ENCODE measurements at regions of chr18 and their contacts with region 1.

Region 1: GRCh38 chr18:24176727-24177416 is 38.0 kb downstream of the CABYR start:
- DNase-seq: peak; percentile 66
- H3K4me3 Mint-ChIP-seq: no peak overlapping the region
- H3K27ac Mint-ChIP-seq: no peak overlapping the region
- H3K4me1 Mint-ChIP-seq: no peaks in the 10 kb centered on the region
- H3K27me3 Mint-ChIP-seq: no peaks in the 10 kb centered on the region

Region 2: DNA sequence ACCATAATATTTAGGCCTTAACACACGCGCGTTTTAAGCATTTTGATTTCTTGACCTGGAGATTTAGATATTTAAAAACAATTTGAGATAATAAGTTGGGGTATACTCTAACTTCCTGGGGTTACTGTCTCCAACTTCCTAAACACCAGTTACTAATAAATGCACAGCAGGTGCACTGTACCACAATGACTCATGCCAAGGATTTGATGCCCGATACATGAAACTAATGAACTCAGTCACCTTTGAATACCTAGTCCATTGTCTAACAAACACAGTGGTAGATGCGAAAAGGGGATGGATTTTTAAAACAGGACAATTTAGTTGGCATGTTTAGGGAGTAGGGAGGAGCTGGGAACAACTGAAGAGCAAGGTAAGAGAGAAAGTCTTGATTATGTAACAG is 16.8 kb before region 1 on chr18:
- CTCF ChIA-PET with region 1: no interaction called
- intact Hi-C with region 1: no loop called
- DNase-seq: no peak
- H3K4me3 Mint-ChIP-seq: no peak overlapping the region
- H3K27ac Mint-ChIP-seq: no peak overlapping the region
- H3K4me1 Mint-ChIP-seq: no peaks in the 10 kb centered on the region
- H3K27me3 Mint-ChIP-seq: no peaks in the 10 kb centered on the region

Region 3: GRCh38 chr18:24368749-24369148 is 191.9 kb after region 1 on chr18:
- CTCF ChIA-PET with region 1: no interaction called
- intact Hi-C with region 1: no loop called
- DNase-seq: peak; percentile 84
- H3K4me3 Mint-ChIP-seq: no peak overlapping the region
- H3K27ac Mint-ChIP-seq: peak overlapping the region; percentile 19
- H3K4me1 Mint-ChIP-seq: peaks cover 23% of the 10 kb centered on the region
- H3K27me3 Mint-ChIP-seq: no peaks in the 10 kb centered on the region

Region 4: GRCh38 chr18:25081001-25081400 is 904.1 kb after region 1 on chr18:
- CTCF ChIA-PET with region 1: no interaction called
- intact Hi-C with region 1: loop called (anchors 10 kb)
- DNase-seq: no peak
- H3K4me3 Mint-ChIP-seq: no peak overlapping the region
- H3K27ac Mint-ChIP-seq: no peak overlapping the region
- H3K4me1 Mint-ChIP-seq: no peaks in the 10 kb centered on the region
- H3K27me3 Mint-ChIP-seq: no peaks in the 10 kb centered on the region